ENCODE measurements at regions of chr10 and their contacts with region 1.

Region 1: DNA sequence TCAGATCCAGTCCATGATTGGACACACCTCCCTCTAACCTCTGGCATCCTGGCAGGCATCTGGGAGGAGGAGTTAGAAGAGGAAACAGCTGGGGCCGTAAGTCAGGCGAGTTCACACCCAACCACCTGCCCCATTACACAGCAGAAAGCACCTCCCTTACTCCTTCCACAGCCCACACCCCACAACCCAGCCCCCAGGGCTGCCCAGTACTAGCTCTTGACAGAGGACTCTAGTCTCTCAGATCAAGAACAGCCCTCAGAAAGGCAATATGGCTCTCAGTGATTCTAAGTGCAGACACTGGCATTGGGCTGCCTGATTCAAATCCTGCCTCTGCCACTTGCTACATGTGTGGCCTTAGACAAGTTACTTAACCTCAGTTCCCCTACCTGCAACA is 34.1 kb downstream of the KCNMA1 start:
- DNase-seq: no peak
- H3K4me3 ChIP-seq: no peak overlapping the region
- H3K27ac ChIP-seq: no peak overlapping the region
- H3K4me1 ChIP-seq: peaks cover 44% of the 10 kb centered on the region
- H3K27me3 ChIP-seq: no peaks in the 10 kb centered on the region
- CTCF ChIP-seq: no peak

Region 2: DNA sequence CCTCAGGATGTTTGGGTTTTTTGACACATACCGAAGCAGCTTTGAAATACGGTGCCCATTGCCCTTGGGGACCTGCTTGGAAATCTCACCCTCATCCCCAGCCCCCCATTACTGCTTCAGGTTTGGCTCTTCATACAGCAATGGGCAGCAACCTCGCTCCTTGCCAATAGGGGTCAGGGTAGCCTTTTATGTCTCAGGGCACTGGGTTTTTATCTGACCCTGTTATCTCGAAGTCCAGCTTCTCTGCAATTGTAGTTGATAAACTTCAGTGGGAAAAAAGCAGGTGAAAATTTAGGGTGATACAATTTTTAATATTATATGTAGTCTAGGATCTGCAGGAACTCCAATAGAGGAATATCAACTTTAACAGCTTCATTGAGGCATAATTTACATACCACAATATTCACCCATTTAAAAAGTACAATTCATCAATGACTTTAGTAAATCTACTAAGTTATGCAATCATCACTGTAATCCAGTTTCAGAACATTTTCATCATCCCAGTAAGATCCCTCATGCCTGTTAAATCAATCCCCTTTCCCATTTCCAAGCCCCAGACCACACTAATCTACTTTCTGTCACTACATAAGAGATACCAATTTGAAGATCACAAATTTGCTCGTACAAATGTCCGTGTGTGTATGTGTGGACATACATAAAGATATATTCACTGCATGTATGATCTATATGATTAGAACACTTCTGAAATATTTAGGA is 352.1 kb before region 1 on chr10:
- CTCF ChIA-PET with region 1: no interaction called
- dilution Hi-C with region 1: no loop called
- in situ Hi-C with region 1: no loop called
- intact Hi-C with region 1: loop called (anchors 1 kb)
- DNase-seq: peak; percentile 29
- H3K4me3 ChIP-seq: no peak overlapping the region
- H3K27ac ChIP-seq: no peak overlapping the region
- H3K4me1 ChIP-seq: peaks cover 10% of the 10 kb centered on the region
- H3K27me3 ChIP-seq: no peaks in the 10 kb centered on the region
- CTCF ChIP-seq: peak; percentile 67 to 77

Measured in mammary epithelial cell (primary cell).